ENCODE measurements at regions of chr11 and their contacts with region 1.

Region 1: DNA sequence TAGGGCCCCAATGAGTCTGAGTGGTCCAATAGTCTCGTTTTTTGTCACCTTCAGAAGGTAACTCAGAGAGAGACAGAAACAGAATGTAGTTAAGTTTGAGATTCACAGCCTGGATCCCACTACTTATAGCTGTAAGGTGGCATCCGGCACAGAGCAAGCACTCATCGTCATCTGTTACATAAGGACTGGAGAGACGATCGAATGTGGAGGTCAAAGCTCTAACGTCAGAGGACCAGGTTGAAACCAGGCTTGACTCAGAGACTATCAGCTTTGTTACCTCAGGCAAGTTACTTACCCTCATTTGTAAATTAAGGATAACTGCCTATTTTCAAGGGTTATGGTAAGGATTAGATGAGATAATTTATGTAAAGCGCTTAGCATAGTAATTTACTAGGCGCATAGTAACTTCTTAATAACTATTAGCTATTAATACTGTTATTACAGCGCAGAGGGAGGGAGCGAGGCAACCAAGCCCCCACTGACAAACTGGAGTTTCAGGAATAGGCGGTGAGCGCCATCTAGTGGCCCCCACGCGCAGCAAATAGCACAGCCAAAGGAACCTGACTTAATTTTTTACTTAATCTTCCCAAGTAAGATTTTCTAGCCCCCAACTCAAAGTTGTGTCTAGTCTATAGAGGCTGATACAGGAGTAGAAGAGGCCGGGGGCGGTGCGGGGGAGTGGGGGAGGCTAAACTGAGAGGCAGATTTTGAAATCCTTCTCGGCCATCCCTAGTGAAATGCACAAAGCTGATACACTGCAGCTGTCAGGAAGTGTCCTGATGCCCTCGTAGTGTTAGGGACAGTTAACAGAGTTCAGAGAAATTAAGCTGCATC is 29.0 kb upstream of the API5 start:
- DNase-seq: peak in 4 of 5 donors; percentile 14 to 36 (median 28)
- H3K4me3 ChIP-seq: no peak overlapping the region
- H3K4me3 Mint-ChIP-seq: no peak overlapping the region
- H3K27ac ChIP-seq: no peak overlapping the region
- H3K27ac Mint-ChIP-seq: no peak overlapping the region
- H3K4me1 ChIP-seq: no peaks in the 10 kb centered on the region
- H3K4me1 Mint-ChIP-seq: no peaks in the 10 kb centered on the region
- H3K27me3 ChIP-seq: no peaks in the 10 kb centered on the region
- H3K27me3 Mint-ChIP-seq: peaks cover 16 to 17% of the 10 kb centered on the region in 2 donors

Region 2: GRCh38 chr11:42770444-42771065 is 512.3 kb before region 1 on chr11:
- CTCF ChIA-PET with region 1: no interaction called
- POLR2A ChIA-PET with region 1: no interaction called
- intact Hi-C with region 1: loop called (anchors 5 kb)
- DNase-seq: no peak
- H3K4me3 ChIP-seq: no peak overlapping the region
- H3K4me3 Mint-ChIP-seq: no peak overlapping the region
- H3K27ac ChIP-seq: no peak overlapping the region
- H3K27ac Mint-ChIP-seq: no peak overlapping the region
- H3K4me1 ChIP-seq: no peaks in the 10 kb centered on the region
- H3K4me1 Mint-ChIP-seq: no peaks in the 10 kb centered on the region
- H3K27me3 ChIP-seq: no peaks in the 10 kb centered on the region
- H3K27me3 Mint-ChIP-seq: no peaks in the 10 kb centered on the region

Region 3: DNA sequence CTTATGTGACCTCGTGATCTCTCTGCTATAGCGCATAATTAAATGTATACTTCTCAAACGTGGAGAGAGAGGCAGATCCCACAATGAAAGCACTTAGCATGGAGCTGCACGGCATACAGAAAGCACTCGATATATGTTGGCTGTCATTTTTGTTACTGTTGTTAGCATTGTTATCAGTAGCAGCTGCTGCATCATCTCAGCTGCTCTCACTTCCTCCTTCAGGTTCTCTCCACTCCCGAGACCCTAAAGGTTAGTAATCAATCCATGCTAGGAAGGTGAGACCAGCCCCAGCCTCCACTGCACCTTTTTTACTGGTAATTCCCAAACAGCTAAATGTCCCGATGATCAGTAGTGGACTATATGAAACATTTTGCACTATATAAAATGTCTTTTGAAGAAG is 15.6 kb after region 1 on chr11:
- CTCF ChIA-PET with region 1: interaction called, 12 read pairs
- POLR2A ChIA-PET with region 1: no interaction called
- intact Hi-C with region 1: no loop called
- DNase-seq: no peak
- H3K4me3 ChIP-seq: no peak overlapping the region
- H3K4me3 Mint-ChIP-seq: no peak overlapping the region
- H3K27ac ChIP-seq: no peak overlapping the region
- H3K27ac Mint-ChIP-seq: no peak overlapping the region
- H3K4me1 ChIP-seq: no peaks in the 10 kb centered on the region
- H3K4me1 Mint-ChIP-seq: no peaks in the 10 kb centered on the region
- H3K27me3 ChIP-seq: no peaks in the 10 kb centered on the region
- H3K27me3 Mint-ChIP-seq: peaks cover 2 to 7% of the 10 kb centered on the region in 2 donors

Region 4: DNA sequence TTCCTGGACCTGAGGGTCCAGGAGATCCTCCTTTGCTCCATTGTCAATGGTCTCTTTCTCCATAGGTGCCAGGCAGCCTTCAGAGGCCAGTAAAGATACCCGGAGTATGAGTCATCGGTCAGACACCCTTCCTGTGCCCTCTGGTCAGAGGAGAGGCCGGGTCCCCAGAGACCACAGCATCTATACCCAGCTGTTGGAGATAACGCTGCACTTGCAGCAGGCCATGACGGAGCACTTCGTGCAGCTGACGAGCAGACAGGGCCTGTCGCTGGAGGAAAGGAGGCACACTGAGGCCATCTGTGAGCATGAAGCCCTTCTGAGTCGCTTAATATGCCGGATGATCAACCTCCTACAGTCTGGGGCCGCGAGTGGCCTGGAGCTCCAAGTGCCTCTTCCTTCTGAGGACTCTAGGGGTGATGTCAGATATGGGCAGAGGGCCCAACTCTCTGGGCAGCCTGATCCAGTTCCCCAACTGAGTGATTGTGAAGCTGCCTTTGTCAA is 765.2 kb after region 1 on chr11 and contains the start of gene ACCSL:
- CTCF ChIA-PET with region 1: no interaction called
- POLR2A ChIA-PET with region 1: no interaction called
- intact Hi-C with region 1: no loop called
- DNase-seq: no peak
- H3K4me3 ChIP-seq: no peak within 1 kb of the TSS
- H3K4me3 Mint-ChIP-seq: no peak within 1 kb of the TSS
- H3K27ac ChIP-seq: no peak within 1 kb of the TSS
- H3K27ac Mint-ChIP-seq: no peak within 1 kb of the TSS
- H3K4me1 ChIP-seq: no peaks in the 10 kb centered on the region
- H3K4me1 Mint-ChIP-seq: no peaks in the 10 kb centered on the region
- H3K27me3 ChIP-seq: no peaks in the 10 kb centered on the region
- H3K27me3 Mint-ChIP-seq: peaks cover 0 to 10% of the 10 kb centered on the region in 2 donors
- total RNA-seq, gene ACCSL: not detected

Measured in CD4-positive, alpha-beta memory T cell (primary cell).